Keratinocyte (primary cell): ENCODE measurements at regions of chr17 and their contacts with region 1.

Region 1: DNA sequence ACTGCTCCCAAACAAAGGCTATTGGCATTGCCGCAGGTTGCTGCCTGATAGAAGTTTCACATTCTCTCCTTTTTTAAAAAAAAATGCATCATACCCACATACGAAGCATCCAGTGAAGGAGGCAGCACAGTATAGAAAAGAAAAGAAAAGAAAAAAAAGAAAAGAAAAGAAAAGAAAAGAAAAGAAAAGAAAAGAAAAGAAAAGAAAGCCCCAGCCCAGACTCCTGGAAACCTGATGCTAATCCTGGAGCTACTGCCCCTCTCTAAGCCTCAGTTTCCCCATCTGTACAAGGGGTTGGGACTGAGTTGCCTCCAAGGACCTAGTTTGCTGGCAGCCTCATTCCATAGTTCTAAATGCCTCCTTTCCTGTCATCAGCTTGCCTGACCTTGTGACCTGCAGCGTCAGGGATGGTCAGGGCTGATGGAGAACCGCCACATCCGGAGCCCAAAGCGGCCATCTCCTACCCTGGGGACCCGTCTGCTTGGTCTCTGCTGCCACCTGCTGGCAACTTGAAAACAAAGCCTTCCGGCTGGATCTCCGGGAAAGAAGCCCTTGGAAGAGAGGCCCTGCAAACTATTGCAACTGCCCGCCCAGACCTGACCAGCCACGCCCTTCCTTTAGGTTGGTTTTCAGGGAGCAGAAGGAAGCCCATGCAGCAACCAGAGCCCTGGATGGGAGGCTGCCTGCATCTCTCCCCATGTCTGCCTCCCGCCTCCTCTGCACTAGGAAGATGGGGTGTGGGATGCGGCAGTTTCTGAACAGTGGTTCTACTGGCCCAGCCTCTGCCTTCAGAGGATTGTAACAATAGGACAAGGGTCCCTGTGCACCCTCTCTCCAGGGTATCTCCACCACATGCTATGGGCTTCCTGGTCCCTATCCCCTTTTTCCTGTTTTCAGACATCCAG is 13.0 kb downstream of the AIPL1 start:
- DNase-seq: peak; percentile 38
- H3K4me3 ChIP-seq: no peak overlapping the region
- H3K27ac ChIP-seq: no peak overlapping the region
- H3K4me1 ChIP-seq: no peaks in the 10 kb centered on the region
- H3K27me3 ChIP-seq: peaks cover 7% of the 10 kb centered on the region
- CTCF ChIP-seq: peak; percentile 81 to 89 (median 85)

Region 2: DNA sequence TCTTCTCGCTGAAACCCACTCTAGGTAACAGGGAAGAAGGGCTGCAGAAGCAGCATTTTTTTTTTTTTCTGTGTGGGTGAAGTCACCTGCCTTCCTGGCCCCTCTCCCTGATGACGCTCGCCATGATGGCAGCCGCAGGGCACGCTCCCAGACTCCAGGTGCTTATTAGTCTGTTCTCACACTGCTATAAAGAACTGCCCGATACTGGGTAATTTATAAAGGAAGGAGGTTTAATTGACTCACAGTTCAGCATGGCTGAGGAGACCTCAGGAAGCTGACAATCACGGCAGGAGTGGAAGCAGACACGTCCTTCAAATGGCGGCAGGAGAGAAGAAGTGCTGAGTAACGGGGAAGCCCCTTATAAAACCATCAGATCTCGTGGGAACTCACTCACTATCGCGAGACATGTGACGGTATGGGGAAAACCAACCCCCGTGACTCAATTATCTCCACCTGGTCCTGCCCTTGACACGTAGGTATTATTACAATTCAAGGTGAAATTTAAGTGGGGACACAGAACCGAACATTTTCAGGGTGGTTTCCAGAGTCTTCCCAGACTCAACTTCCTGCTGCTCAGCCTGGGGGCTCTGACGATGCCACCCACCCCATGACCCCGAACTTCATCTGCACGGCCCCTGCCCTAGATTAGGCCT is 802.7 kb before region 1 on chr17:
- dilution Hi-C with region 1: loop called (anchors 25 kb)
- DNase-seq: no peak
- H3K4me3 ChIP-seq: no peak overlapping the region
- H3K27ac ChIP-seq: no peak overlapping the region
- H3K4me1 ChIP-seq: no peaks in the 10 kb centered on the region
- H3K27me3 ChIP-seq: peaks cover 3% of the 10 kb centered on the region
- CTCF ChIP-seq: no peak

Region 3: DNA sequence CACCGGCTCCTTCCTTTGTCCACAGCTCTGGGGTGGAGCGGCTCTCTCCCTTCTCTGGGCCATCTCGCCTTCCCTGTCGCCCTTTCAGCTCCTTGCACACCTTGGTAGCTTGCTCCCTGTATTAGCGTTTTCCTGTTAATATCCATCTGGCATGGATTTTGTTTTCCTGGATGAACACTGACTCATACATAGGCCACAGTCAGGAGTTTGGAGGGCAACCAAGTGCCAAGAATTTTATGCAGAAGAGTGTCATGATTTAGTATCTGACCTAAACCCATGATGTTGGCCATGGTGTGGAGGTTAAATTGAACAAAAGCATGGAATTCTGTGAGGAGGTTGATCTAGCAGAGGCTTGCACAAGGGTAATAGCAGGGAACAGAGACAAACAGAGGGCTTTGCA is 167.9 kb before region 1 on chr17:
- dilution Hi-C with region 1: no loop called
- DNase-seq: no peak
- H3K4me3 ChIP-seq: no peak overlapping the region
- H3K27ac ChIP-seq: no peak overlapping the region
- H3K4me1 ChIP-seq: no peaks in the 10 kb centered on the region
- H3K27me3 ChIP-seq: peaks cover 2% of the 10 kb centered on the region
- CTCF ChIP-seq: no peak

Region 4: GRCh38 chr17:6454957-6455705 is 33.2 kb after region 1 on chr17:
- dilution Hi-C with region 1: no loop called
- DNase-seq: peak; percentile 11
- H3K4me3 ChIP-seq: no peak overlapping the region
- H3K27ac ChIP-seq: no peak overlapping the region
- H3K4me1 ChIP-seq: peaks cover 3% of the 10 kb centered on the region
- H3K27me3 ChIP-seq: no peaks in the 10 kb centered on the region
- CTCF ChIP-seq: no peak

Region 5: GRCh38 chr17:6523330-6523729 is 101.4 kb after region 1 on chr17:
- dilution Hi-C with region 1: no loop called
- DNase-seq: no peak
- H3K4me3 ChIP-seq: no peak overlapping the region
- H3K27ac ChIP-seq: no peak overlapping the region
- H3K4me1 ChIP-seq: peaks cover 9% of the 10 kb centered on the region
- H3K27me3 ChIP-seq: no peaks in the 10 kb centered on the region
- CTCF ChIP-seq: no peak

Region 6: GRCh38 chr17:6948562-6948961 is 526.6 kb after region 1 on chr17:
- dilution Hi-C with region 1: no loop called
- DNase-seq: no peak
- H3K4me3 ChIP-seq: no peak overlapping the region
- H3K27ac ChIP-seq: no peak overlapping the region
- H3K4me1 ChIP-seq: no peaks in the 10 kb centered on the region
- H3K27me3 ChIP-seq: no peaks in the 10 kb centered on the region
- CTCF ChIP-seq: no peak